ENCODE measurements at regions of chr5 and their contacts with region 1.

Region 1: DNA sequence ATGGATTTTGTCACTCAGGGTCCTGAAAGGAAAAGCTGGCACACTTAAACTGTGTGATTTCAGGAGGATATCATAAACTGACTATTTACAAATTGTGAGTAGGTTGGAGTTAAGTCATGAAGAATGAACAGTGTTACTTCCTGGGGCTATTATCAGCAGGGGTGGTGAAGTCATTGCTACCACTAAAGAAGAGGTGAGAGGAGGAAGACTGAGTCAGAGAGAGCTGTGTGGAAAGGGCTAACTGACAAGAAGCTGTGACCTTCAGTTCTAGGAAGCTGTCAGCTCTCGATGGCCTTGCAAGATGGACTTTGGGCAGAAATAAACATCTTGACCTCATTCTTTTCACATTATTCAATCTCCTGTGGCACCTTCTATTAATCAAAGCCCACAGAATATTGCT is 72.3 kb upstream of the STARD4 start:
- DNase-seq: no peak
- H3K4me3 Mint-ChIP-seq: no peak overlapping the region
- H3K27ac Mint-ChIP-seq: peak overlapping the region; percentile 77
- H3K4me1 Mint-ChIP-seq: peaks cover 50% of the 10 kb centered on the region
- H3K27me3 Mint-ChIP-seq: no peaks in the 10 kb centered on the region

Region 2: GRCh38 chr5:111530298-111530740 is 54.3 kb before region 1 on chr5:
- intact Hi-C with region 1: loop called (anchors 2 kb)
- DNase-seq: peak; percentile 80
- H3K4me3 Mint-ChIP-seq: peak overlapping the region; percentile 46
- H3K27ac Mint-ChIP-seq: peak overlapping the region; percentile 87
- H3K4me1 Mint-ChIP-seq: peaks cover 35% of the 10 kb centered on the region
- H3K27me3 Mint-ChIP-seq: no peaks in the 10 kb centered on the region

Region 3: DNA sequence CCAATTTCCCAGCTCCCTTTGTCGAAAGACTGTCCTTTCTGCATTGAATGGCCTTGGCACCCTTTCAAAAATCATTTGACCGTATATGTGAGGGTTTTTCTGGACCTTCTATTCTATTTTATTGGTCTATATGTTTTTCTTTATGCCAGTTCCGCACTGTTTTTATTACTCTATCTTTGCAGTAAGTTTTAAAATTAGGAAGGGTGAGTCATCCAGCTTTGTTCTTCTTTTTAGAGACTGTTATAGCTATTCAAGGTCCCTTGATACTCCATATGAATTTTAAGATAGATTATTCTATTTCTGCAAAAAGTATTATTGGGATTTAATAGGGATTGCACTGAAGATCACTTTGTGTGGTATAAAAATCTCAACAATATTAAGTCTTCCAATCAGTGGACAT is 28.1 kb before region 1 on chr5:
- intact Hi-C with region 1: no loop called
- DNase-seq: no peak
- H3K4me3 Mint-ChIP-seq: no peak overlapping the region
- H3K27ac Mint-ChIP-seq: no peak overlapping the region
- H3K4me1 Mint-ChIP-seq: peaks cover 13% of the 10 kb centered on the region
- H3K27me3 Mint-ChIP-seq: peaks cover 15% of the 10 kb centered on the region

Region 4: GRCh38 chr5:111618623-111619271 is 34.1 kb after region 1 on chr5:
- intact Hi-C with region 1: loop called (anchors 2 kb)
- DNase-seq: no peak
- H3K4me3 Mint-ChIP-seq: no peak overlapping the region
- H3K27ac Mint-ChIP-seq: peak overlapping the region; percentile 51
- H3K4me1 Mint-ChIP-seq: peaks cover 14% of the 10 kb centered on the region
- H3K27me3 Mint-ChIP-seq: peaks cover 16% of the 10 kb centered on the region

Region 5: GRCh38 chr5:111792471-111793058 is 207.9 kb after region 1 on chr5:
- intact Hi-C with region 1: no loop called
- DNase-seq: no peak
- H3K4me3 Mint-ChIP-seq: no peak overlapping the region
- H3K27ac Mint-ChIP-seq: no peak overlapping the region
- H3K4me1 Mint-ChIP-seq: no peaks in the 10 kb centered on the region
- H3K27me3 Mint-ChIP-seq: peaks cover 4% of the 10 kb centered on the region